ENCODE measurements at regions of chr16 and their contacts with region 1.

Region 1: DNA sequence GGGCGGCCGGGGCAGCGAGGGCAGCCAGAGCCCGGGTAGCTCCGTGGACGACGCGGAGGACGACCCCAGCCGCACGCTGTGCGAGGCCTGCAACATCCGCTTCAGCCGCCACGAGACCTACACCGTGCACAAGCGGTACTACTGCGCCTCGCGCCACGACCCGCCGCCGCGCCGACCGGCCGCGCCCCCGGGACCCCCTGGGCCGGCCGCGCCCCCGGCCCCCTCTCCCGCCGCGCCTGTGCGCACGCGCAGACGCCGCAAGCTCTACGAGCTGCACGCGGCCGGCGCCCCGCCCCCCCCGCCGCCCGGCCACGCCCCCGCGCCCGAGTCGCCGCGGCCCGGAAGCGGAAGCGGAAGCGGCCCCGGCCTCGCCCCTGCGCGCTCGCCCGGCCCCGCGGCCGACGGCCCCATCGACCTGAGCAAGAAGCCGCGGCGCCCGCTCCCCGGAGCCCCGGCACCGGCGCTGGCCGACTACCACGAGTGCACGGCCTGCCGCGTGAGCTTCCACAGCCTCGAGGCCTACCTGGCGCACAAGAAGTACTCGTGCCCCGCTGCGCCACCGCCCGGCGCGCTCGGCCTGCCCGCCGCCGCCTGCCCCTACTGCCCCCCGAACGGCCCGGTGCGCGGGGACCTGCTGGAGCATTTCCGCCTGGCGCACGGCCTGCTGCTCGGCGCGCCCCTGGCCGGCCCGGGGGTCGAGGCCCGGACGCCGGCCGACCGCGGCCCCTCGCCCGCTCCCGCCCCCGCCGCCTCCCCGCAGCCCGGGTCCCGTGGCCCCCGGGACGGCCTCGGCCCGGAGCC is 36.1 kb upstream of the ZC3H18 start:
- DNase-seq: no peak
- ATAC-seq: peak; percentile 83
- H3K4me3 ChIP-seq: peak overlapping the region; percentile 76; the same call in 1 of the 2 replicates
- H3K27ac ChIP-seq: peak overlapping the region; percentile 67
- H3K4me1 ChIP-seq: peaks cover 5% of the 10 kb centered on the region
- H3K27me3 ChIP-seq: no peaks in the 10 kb centered on the region
- CTCF ChIP-seq: no peak
- EP300 ChIP-seq: no peak
- POLR2A ChIP-seq: peak; percentile 80
- RAD21 ChIP-seq: no peak

Region 2: DNA sequence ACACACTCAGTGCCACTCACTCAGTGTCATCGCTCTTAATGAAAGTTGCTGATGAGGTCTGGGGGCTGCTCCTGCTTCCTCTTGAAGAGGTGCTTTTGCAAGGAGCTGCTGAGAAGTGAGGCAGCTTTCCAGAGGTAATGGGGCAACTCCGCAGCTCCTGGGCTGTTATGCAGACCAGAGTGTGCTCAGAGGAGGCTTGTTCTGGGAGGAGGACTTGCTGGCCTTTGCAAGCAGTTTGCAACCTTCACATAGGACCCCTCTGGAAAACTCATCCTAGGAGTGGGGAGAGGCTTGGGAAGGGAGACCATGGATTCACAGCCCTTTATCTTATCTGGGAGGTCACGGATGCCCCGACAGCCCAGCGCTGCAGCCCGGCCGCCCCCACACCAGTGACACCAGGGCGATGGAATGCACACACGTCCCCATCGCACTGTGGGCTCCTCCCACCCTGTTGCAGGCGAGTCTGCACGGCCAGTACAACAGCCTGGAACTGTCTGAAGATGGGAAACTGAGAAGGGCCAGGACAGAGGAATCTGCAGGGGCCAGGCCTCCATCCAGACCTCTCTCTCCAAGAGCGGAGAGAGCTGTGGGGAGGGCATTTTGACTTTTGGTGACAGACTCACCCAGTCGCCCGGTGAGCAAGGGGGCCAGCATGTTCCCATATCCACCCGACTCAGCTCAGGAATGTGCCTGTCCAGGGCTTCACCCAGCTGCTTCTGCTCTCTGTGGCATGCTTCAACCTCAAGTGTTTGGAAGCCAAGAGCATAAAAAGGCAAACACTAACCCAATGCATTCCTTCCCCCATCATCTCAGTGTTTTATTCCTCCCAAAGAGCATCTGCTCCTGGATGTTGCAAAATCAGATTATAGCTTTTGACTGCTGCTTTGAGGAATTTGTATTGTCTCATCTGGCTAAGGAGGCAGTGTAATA is 230.0 kb before region 1 on chr16:
- CTCF ChIA-PET with region 1: no interaction called
- POLR2A ChIA-PET with region 1: no interaction called
- RAD21 ChIA-PET with region 1: no interaction called
- SMC1A ChIA-PET with region 1: no interaction called
- in situ Hi-C with region 1: no loop called
- intact Hi-C with region 1: no loop called
- DNase-seq: no peak
- ATAC-seq: no peak
- H3K4me3 ChIP-seq: no peak overlapping the region
- H3K27ac ChIP-seq: no peak overlapping the region
- H3K4me1 ChIP-seq: no peaks in the 10 kb centered on the region
- H3K27me3 ChIP-seq: no peaks in the 10 kb centered on the region; a peak in 2 of 4 replicates
- CTCF ChIP-seq: no peak
- EP300 ChIP-seq: no peak
- POLR2A ChIP-seq: no peak
- RAD21 ChIP-seq: no peak

Region 3: DNA sequence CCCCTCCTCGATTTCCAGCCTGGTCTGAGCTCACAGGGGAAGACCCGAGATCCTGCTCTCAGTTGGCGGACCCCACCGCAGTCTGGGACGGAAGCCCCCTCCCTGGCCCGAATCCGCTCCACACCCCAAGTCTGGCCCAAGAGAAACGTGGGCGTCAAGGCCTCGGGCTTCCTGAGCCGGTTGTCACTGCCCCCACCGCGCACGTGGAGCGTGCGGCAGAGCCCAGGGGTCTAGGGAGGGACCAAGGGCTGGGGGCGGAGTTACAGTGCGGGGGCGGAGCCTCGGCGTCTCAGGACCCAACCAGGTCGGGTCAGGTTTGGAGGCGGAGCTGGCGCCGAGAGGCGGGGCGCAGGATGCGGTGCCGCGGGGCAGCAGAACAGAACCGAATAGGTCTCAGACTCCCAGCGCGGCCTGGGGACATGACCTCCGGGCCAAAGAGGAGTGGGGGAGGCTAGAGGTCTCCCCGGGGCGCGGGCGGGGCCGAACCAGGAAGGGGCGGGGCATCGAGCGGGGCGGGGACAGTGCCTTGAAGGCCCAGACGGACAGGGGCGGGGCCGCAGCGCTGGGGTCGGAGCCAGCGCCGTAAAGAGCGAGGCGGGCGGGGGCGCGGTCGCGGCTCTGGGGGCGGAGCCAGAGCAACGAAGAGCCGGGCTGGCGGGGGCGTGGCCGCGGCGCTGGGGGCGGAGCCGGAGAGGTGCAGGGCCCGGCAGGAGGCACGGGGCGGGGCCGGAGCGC is 81.5 kb before region 1 on chr16:
- CTCF ChIA-PET with region 1: no interaction called
- POLR2A ChIA-PET with region 1: no interaction called
- RAD21 ChIA-PET with region 1: no interaction called
- SMC1A ChIA-PET with region 1: no interaction called
- in situ Hi-C with region 1: loop called (anchors 5 kb)
- intact Hi-C with region 1: no loop called
- DNase-seq: peak; percentile 67
- ATAC-seq: peak; percentile 72
- H3K4me3 ChIP-seq: peak overlapping the region; percentile 64
- H3K27ac ChIP-seq: peak overlapping the region; percentile 79
- H3K4me1 ChIP-seq: peaks cover 29% of the 10 kb centered on the region
- H3K27me3 ChIP-seq: peaks cover 0 to 2% of the 10 kb centered on the region in 2 experiments; a peak in 1 of 4 replicates
- CTCF ChIP-seq: no peak
- EP300 ChIP-seq: no peak
- POLR2A ChIP-seq: 0 out of 2 replicates have a peak, but pooled peaks have one; percentile 9
- RAD21 ChIP-seq: no peak